ENCODE measurements at regions of chr1 and their contacts with region 1.

Region 1: GRCh38 chr1:173867753-173868265 is at the start of gene GAS5:
- DNase-seq: peak; percentile 100
- H3K4me3 Mint-ChIP-seq: peak within 1 kb of the TSS; percentile 94
- H3K27ac Mint-ChIP-seq: peak within 1 kb of the TSS; percentile 96
- H3K4me1 Mint-ChIP-seq: peaks cover 55% of the 10 kb centered on the region
- H3K27me3 Mint-ChIP-seq: no peaks in the 10 kb centered on the region
- CTCF ChIP-seq: no peak
- total RNA-seq, gene GAS5: 3,184 and 3,772 TPM in 2 replicates

Region 2: DNA sequence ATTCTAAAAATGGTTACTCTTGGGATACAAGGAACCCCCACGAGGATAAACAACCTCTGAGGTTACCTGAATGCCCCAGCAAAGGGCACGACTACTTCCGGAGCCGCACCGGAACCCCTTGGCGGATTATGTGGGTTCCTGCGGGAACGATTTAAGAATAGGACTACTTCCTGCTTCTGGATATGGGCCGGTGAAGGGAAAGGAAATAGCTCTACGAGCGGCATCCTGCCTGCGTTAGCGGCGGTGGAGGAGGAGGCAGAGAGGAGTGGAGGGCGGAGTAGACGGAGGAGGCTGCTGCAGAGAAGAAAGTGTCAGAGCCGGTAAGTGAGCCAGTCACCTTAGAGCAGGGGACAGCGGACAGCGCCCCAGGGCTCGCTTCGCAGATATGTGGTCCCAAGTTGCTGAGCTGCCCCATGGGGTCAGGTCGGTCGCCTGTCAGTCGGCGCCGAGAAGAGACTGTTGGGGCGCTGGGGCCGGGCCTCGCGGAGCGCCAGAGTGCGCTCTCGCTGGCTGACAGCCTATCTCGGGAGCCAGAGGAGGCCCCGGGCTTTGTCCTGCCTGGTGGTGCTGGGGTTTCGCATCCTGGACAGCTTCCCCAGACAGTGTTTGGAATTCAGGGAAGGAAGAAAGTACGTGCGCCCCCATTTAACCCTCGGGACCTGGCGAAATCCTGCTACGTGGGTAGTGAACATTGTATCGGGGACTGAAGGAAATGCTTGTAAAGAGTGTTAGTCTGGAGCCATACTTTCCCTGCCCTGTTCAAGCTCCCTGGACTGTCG is 152.9 kb before region 1 on chr1 and contains the start of gene KLHL20:
- CTCF ChIA-PET with region 1: interaction called, 3 read pairs
- POLR2A ChIA-PET with region 1: interaction called, 32 read pairs
- intact Hi-C with region 1: no loop called
- DNase-seq: peak; percentile 97
- H3K4me3 Mint-ChIP-seq: peak within 1 kb of the TSS; percentile 80
- H3K27ac Mint-ChIP-seq: peak within 1 kb of the TSS; percentile 87
- H3K4me1 Mint-ChIP-seq: peaks cover 7% of the 10 kb centered on the region
- H3K27me3 Mint-ChIP-seq: peaks cover 12% of the 10 kb centered on the region
- CTCF ChIP-seq: no peak
- total RNA-seq, gene KLHL20: 36.7 and 44.3 TPM in 2 replicates

Region 3: DNA sequence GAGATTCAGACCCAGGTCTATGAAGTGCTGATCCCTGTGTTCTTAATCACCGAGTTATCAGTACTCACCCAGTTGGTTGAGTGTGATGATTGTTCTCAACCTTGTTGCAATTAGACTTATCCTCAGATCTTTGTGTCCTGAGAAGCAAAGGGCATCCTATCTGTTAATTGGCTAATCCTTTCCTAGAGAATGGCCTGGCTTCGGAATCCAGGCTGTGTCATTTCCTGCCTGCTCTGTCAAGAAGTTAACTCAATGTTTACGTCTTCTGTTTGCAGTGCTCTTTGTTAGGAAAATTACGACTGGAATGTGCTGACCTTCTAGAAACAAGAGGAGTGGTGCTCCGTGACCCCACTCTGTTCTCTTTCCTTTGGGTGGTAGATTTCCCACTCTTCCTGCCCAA is 14.7 kb before region 1 on chr1:
- CTCF ChIA-PET with region 1: interaction called, 9 read pairs
- POLR2A ChIA-PET with region 1: interaction called, 39 read pairs
- intact Hi-C with region 1: no loop called
- DNase-seq: peak; percentile 49
- H3K4me3 Mint-ChIP-seq: no peak overlapping the region
- H3K27ac Mint-ChIP-seq: peak overlapping the region; percentile 25
- H3K4me1 Mint-ChIP-seq: no peaks in the 10 kb centered on the region
- H3K27me3 Mint-ChIP-seq: no peaks in the 10 kb centered on the region
- CTCF ChIP-seq: no peak

Region 4: DNA sequence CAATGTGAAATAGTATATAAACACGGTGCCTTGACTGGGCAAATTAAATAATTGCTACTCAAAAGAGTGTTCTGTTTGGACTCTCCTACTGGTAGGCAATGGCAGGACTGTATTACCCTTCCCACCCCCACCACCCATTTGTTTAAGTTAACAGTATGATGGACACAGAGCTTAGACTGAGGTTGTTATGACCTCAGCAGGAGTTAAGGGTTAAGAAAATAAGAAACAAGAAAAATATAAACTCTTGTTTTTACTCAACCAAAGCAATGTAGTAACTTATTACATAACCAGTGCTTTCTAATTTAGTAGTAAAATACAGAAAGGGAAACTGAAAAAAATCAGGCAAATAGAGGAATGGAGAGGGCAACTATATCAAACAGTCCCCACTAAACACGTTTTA is 69.3 kb after region 1 on chr1:
- CTCF ChIA-PET with region 1: no interaction called
- POLR2A ChIA-PET with region 1: interaction called, 14 read pairs
- intact Hi-C with region 1: no loop called
- DNase-seq: no peak
- H3K4me3 Mint-ChIP-seq: no peak overlapping the region
- H3K27ac Mint-ChIP-seq: no peak overlapping the region
- H3K4me1 Mint-ChIP-seq: no peaks in the 10 kb centered on the region
- H3K27me3 Mint-ChIP-seq: no peaks in the 10 kb centered on the region
- CTCF ChIP-seq: no peak

Region 5: DNA sequence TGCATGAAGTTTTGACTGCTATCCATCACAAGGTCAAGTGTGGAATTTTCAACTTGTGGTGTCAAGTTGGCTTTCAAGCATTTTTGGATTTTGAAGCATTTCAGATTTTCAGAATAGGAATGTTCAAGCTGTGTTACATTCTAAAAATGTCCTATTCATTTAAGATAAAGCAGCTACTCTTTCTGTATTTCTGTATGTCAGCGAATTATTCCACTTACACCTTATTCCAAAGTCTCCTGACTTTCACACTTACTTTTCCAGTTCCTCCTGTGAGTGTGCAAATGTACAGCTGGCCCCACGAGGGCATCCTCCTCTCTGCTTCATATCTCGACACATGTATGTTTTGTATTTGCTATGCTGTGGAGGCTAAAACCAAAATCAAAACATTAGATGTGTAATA is 102.4 kb after region 1 on chr1:
- CTCF ChIA-PET with region 1: no interaction called
- POLR2A ChIA-PET with region 1: no interaction called
- intact Hi-C with region 1: no loop called
- DNase-seq: no peak
- H3K4me3 Mint-ChIP-seq: no peak overlapping the region
- H3K27ac Mint-ChIP-seq: no peak overlapping the region
- H3K4me1 Mint-ChIP-seq: no peaks in the 10 kb centered on the region
- H3K27me3 Mint-ChIP-seq: no peaks in the 10 kb centered on the region
- CTCF ChIP-seq: no peak

Region 6: GRCh38 chr1:174074757-174075156 is 206.9 kb after region 1 on chr1:
- CTCF ChIA-PET with region 1: interaction called, 4 read pairs
- POLR2A ChIA-PET with region 1: interaction called, 5 read pairs
- intact Hi-C with region 1: loop called (anchors 2 kb)
- DNase-seq: peak; percentile 52
- H3K4me3 Mint-ChIP-seq: no peak overlapping the region
- H3K27ac Mint-ChIP-seq: no peak overlapping the region
- H3K4me1 Mint-ChIP-seq: no peaks in the 10 kb centered on the region
- H3K27me3 Mint-ChIP-seq: peaks cover 16% of the 10 kb centered on the region
- CTCF ChIP-seq: peak; percentile 68

Region 7: DNA sequence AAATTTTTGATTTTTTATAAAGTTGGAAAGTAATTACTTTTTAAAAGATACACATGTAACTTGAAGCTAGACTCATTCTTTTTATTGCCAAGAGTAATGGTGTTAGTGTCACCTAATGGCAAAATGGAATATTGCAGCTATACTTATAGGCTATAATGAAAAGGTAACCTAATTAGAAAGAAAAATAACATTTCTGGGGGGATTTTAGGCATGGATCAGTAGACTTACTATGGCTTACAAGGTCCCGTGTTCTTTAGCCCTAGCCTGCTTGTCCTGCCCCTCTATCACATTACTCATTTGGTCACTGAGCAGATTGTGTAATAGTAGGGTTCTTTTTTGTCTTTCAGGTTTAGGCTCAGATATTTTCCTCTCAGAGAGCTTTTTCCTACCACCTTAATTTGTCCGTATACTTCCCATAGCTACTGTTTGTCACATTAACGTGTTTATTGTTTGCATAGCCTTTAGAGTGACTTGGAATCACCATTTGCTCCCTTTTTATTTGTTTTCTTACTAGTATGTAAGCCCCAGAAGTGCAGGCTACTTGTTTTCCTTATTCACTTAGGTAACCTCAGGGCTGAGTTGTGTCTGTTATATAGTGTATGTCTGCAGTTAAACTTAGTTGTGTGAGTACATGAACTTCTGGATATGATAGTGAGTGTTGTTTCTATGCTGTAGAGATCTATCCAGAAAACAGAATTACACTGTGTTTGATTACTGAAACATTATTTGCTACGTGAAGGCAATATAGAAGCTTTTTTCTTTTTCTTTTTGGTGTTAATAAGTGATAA is 350.2 kb after region 1 on chr1:
- CTCF ChIA-PET with region 1: interaction called, 7 read pairs
- POLR2A ChIA-PET with region 1: interaction called, 5 read pairs
- intact Hi-C with region 1: loop called (anchors 5 kb)
- DNase-seq: peak; percentile 61
- H3K4me3 Mint-ChIP-seq: no peak overlapping the region
- H3K27ac Mint-ChIP-seq: no peak overlapping the region
- H3K4me1 Mint-ChIP-seq: peaks cover 6% of the 10 kb centered on the region
- H3K27me3 Mint-ChIP-seq: no peaks in the 10 kb centered on the region
- CTCF ChIP-seq: peak; percentile 90